ENCODE measurements at regions of chr12 and their contacts with region 1.

Region 1: DNA sequence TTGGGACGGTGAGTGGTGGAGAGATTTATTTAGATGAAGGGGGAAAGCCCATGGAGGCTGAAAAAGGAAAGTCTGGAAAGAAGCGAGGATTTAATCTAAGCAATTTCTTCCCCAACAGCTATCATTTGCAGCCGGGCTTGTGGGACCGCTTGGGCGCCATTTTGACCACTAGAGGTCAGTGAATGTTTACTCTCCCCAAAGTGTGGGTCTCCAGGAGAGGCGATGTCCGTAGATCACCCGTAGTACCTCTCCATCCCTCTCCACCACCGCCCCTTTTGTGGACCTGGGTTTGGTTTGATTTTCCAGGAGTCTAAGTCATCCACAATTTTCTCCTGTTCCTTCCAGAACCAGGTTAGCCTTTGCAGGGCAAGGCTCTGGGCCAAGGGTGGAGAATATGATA is 91.2 kb upstream of the PARP11 start:
- DNase-seq: no peak
- ATAC-seq: no peak
- H3K4me3 ChIP-seq: no peak overlapping the region
- H3K4me3 Mint-ChIP-seq: no peak overlapping the region
- H3K27ac ChIP-seq: no peak overlapping the region
- H3K27ac Mint-ChIP-seq: peak overlapping the region in 4 of 9 donors; percentile 72 to 89 (median 84)
- H3K4me1 ChIP-seq: peaks cover 0 to 20% of the 10 kb centered on the region in 2 donors
- H3K4me1 Mint-ChIP-seq: peaks cover 13 to 47% (median 24%) of the 10 kb centered on the region in 7 donors
- H3K27me3 ChIP-seq: no peaks in the 10 kb centered on the region
- H3K27me3 Mint-ChIP-seq: no peaks in the 10 kb centered on the region

Region 2: DNA sequence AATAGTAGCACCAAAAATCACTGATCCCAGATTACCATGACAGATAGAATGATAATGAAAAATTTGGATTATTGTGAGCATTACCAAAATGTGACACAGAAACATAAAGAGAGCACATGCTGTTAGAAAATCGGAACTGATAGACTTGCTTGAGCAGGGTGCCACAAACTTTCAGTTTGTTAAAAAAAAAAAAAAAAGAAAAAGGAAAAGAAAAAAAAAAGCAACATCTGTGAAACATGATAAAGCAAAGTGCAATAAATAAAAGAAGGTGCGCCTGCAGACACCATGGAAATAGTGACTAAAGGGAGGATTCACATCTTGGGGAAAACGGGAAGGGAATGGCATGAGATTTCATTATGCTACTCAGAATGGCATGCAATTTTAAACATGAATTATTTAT is 84.6 kb before region 1 on chr12:
- CTCF ChIA-PET with region 1: interaction called, 286 read pairs
- POLR2A ChIA-PET with region 1: interaction called, 79 read pairs
- intact Hi-C with region 1: loop called (anchors 1 kb)
- DNase-seq: no peak
- ATAC-seq: no peak
- H3K4me3 ChIP-seq: no peak overlapping the region
- H3K4me3 Mint-ChIP-seq: peak overlapping the region in 7 of 10 donors; percentile 22 to 78 (median 56)
- H3K27ac ChIP-seq: no peak overlapping the region
- H3K27ac Mint-ChIP-seq: peak overlapping the region; percentile 60 to 93 (median 89)
- H3K4me1 ChIP-seq: peaks cover 0 to 16% of the 10 kb centered on the region in 2 donors
- H3K4me1 Mint-ChIP-seq: peaks cover 4 to 28% (median 23%) of the 10 kb centered on the region in 7 donors
- H3K27me3 ChIP-seq: no peaks in the 10 kb centered on the region
- H3K27me3 Mint-ChIP-seq: peaks cover 0 to 16% (median 0%) of the 10 kb centered on the region in 5 donors

Region 3: DNA sequence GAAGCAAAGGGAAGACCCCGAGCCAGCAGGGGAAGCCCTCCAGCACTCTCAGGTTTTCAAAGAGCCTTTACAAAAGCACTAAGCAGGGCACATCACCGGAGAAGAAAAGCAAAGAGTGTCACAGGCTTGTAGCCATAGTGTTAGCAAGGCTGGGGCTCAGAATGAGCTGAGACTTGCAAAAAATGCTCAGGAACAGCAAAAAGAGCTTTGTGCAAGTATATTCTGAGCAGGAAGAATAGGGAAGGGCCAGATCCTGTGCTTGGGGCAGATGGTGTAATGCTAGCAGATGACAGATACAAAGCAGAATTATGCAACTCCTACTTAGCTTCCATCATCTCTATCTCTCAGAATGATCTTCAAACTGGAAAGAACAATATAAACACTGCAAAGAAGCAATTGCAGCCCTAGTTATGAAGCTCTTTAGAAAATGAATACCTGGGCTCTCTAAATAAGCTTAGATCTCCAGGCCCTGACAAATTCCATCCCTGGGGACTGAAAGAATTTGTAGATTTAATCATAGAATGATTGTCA is 67.6 kb before region 1 on chr12:
- CTCF ChIA-PET with region 1: interaction called, 286 read pairs
- POLR2A ChIA-PET with region 1: interaction called, 34 read pairs
- intact Hi-C with region 1: no loop called
- DNase-seq: no peak
- ATAC-seq: peak; percentile 66
- H3K4me3 ChIP-seq: peak overlapping the region; percentile 38
- H3K4me3 Mint-ChIP-seq: peak overlapping the region; percentile 68 to 89 (median 78)
- H3K27ac ChIP-seq: peak overlapping the region; percentile 71
- H3K27ac Mint-ChIP-seq: peak overlapping the region in 8 of 9 donors; percentile 94 to 98 (median 97)
- H3K4me1 ChIP-seq: peaks cover 44 to 84% of the 10 kb centered on the region in 2 donors
- H3K4me1 Mint-ChIP-seq: peaks cover 2 to 58% (median 45%) of the 10 kb centered on the region in 7 donors
- H3K27me3 ChIP-seq: no peaks in the 10 kb centered on the region
- H3K27me3 Mint-ChIP-seq: no peaks in the 10 kb centered on the region

Region 4: GRCh38 chr12:3931746-3932145 is 32.7 kb before region 1 on chr12:
- CTCF ChIA-PET with region 1: interaction called, 26 read pairs
- POLR2A ChIA-PET with region 1: interaction called, 13 read pairs
- intact Hi-C with region 1: loop called in 1 of 2 experiments (anchors 1 kb)
- DNase-seq: no peak
- ATAC-seq: no peak
- H3K4me3 ChIP-seq: no peak overlapping the region
- H3K4me3 Mint-ChIP-seq: peak overlapping the region in 3 of 10 donors; percentile 7 to 81 (median 27)
- H3K27ac ChIP-seq: no peak overlapping the region
- H3K27ac Mint-ChIP-seq: peak overlapping the region in 6 of 9 donors; percentile 51 to 89 (median 74)
- H3K4me1 ChIP-seq: peaks cover 0 to 46% of the 10 kb centered on the region in 2 donors
- H3K4me1 Mint-ChIP-seq: peaks cover 29 to 82% (median 73%) of the 10 kb centered on the region in 7 donors
- H3K27me3 ChIP-seq: no peaks in the 10 kb centered on the region
- H3K27me3 Mint-ChIP-seq: peaks cover 0 to 16% (median 0%) of the 10 kb centered on the region in 5 donors

Region 5: GRCh38 chr12:3980504-3981272 is 16.2 kb after region 1 on chr12:
- CTCF ChIA-PET with region 1: interaction called, 38 read pairs
- POLR2A ChIA-PET with region 1: interaction called, 47 read pairs
- intact Hi-C with region 1: no loop called
- DNase-seq: no peak
- ATAC-seq: no peak
- H3K4me3 ChIP-seq: no peak overlapping the region
- H3K4me3 Mint-ChIP-seq: no peak overlapping the region
- H3K27ac ChIP-seq: no peak overlapping the region
- H3K27ac Mint-ChIP-seq: peak overlapping the region in 1 of 9 donors; percentile 33
- H3K4me1 ChIP-seq: peaks cover 0 to 31% of the 10 kb centered on the region in 2 donors
- H3K4me1 Mint-ChIP-seq: peaks cover 19 to 43% (median 37%) of the 10 kb centered on the region in 7 donors
- H3K27me3 ChIP-seq: no peaks in the 10 kb centered on the region
- H3K27me3 Mint-ChIP-seq: no peaks in the 10 kb centered on the region

Region 6: GRCh38 chr12:4037747-4038312 is 73.4 kb after region 1 on chr12:
- CTCF ChIA-PET with region 1: interaction called, 29 read pairs
- POLR2A ChIA-PET with region 1: no interaction called
- intact Hi-C with region 1: loop called in 1 of 2 experiments (anchors 1 kb)
- DNase-seq: peak in 5 of 9 donors; percentile 19 to 31 (median 21)
- ATAC-seq: no peak
- H3K4me3 ChIP-seq: no peak overlapping the region
- H3K4me3 Mint-ChIP-seq: no peak overlapping the region
- H3K27ac ChIP-seq: no peak overlapping the region
- H3K27ac Mint-ChIP-seq: no peak overlapping the region
- H3K4me1 ChIP-seq: no peaks in the 10 kb centered on the region
- H3K4me1 Mint-ChIP-seq: peaks cover 0 to 15% (median 0%) of the 10 kb centered on the region in 7 donors
- H3K27me3 ChIP-seq: no peaks in the 10 kb centered on the region
- H3K27me3 Mint-ChIP-seq: peaks cover 0 to 39% (median 0%) of the 10 kb centered on the region in 5 donors

Region 7: GRCh38 chr12:4555804-4556203 is 591.4 kb after region 1 on chr12:
- CTCF ChIA-PET with region 1: no interaction called
- POLR2A ChIA-PET with region 1: no interaction called
- intact Hi-C with region 1: no loop called
- DNase-seq: no peak
- ATAC-seq: peak; percentile 45
- H3K4me3 ChIP-seq: no peak overlapping the region
- H3K4me3 Mint-ChIP-seq: no peak overlapping the region
- H3K27ac ChIP-seq: no peak overlapping the region
- H3K27ac Mint-ChIP-seq: no peak overlapping the region
- H3K4me1 ChIP-seq: no peaks in the 10 kb centered on the region
- H3K4me1 Mint-ChIP-seq: peaks cover 0 to 1% (median 0%) of the 10 kb centered on the region in 7 donors
- H3K27me3 ChIP-seq: no peaks in the 10 kb centered on the region
- H3K27me3 Mint-ChIP-seq: no peaks in the 10 kb centered on the region

Measured in naive thymus-derived CD4-positive, alpha-beta T cell (primary cell).